HCT116 (cell line): ENCODE measurements at regions of chr10 and their contacts with region 1.

Region 1: DNA sequence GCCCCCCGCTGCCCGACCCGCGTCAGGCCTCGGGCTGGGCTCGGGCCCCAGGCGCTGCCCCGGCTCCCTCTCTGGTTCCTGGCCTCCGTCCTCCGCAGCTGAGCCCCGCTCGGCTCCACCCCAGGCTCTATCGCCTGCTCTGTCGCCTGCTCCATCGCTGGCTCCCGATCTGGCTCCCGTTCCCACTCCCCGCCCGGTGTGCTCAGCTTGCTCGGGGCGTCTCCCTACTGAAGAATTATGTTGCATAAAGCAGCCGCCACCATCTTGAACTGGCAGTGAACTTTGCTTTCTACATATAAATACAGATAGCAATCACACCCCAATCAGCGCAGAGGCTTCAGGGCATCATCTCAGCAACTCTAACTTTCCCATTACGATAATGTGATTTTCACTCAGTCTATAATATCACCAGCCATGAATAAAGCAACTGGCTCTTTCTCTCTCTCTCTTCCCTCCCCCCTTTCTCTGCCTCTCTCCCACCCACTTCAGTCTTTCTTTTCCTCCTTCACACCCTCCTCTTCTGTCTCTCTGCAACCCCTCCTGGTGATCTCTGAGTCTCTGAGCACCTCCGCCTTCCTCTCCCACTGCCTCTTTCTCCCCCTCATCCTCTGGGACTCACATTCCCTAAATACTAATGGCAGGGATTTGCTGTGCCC is 43.3 kb upstream of the BTRC start:
- DNase-seq: no peak
- ATAC-seq: no peak
- H3K4me3 ChIP-seq: no peak overlapping the region
- H3K27ac ChIP-seq: no peak overlapping the region
- H3K4me1 ChIP-seq: no peaks in the 10 kb centered on the region
- H3K27me3 ChIP-seq: peaks cover 20% of the 10 kb centered on the region
- CTCF ChIP-seq: no peak
- POLR2A ChIP-seq: no peak
- RAD21 ChIP-seq: no peak

Region 2: DNA sequence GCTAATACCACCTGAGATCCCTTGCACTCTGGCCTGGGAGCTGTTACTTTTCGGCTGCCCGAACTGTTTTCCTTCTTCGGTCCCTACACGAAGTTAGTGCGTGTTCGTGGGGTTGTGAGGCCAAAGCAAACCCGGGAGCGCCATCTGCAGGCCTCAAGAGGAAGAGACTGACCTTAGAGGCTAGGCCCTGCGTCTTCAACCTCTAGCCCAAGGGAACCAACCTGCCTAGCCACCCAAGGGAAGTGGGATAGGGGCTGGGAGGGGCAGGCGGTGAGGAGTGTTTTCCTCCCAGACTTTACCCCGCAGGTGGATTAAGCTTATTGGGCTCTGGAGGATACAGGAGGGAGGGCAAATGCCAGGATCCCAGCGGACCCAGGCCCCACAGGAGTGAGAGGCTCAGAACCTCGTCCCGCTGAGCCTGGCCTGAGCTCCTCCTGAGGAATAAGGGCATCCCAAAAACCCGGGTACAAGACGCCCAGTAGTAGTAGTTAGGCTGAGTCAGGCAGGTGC is 567.0 kb before region 1 on chr10:
- CTCF ChIA-PET with region 1: no interaction called
- POLR2A ChIA-PET with region 1: no interaction called
- RAD21 ChIA-PET with region 1: no interaction called
- intact Hi-C with region 1: no loop called
- DNase-seq: peak; percentile 80
- ATAC-seq: peak; percentile 69
- H3K4me3 ChIP-seq: no peak overlapping the region
- H3K27ac ChIP-seq: no peak overlapping the region
- H3K4me1 ChIP-seq: peaks cover 8 to 31% of the 10 kb centered on the region in 2 experiments; a peak in 3 of 4 replicates
- H3K27me3 ChIP-seq: no peaks in the 10 kb centered on the region
- CTCF ChIP-seq: peak; percentile 98 to 99 (median 98)
- POLR2A ChIP-seq: no peak
- RAD21 ChIP-seq: peak; percentile 98

Region 3: DNA sequence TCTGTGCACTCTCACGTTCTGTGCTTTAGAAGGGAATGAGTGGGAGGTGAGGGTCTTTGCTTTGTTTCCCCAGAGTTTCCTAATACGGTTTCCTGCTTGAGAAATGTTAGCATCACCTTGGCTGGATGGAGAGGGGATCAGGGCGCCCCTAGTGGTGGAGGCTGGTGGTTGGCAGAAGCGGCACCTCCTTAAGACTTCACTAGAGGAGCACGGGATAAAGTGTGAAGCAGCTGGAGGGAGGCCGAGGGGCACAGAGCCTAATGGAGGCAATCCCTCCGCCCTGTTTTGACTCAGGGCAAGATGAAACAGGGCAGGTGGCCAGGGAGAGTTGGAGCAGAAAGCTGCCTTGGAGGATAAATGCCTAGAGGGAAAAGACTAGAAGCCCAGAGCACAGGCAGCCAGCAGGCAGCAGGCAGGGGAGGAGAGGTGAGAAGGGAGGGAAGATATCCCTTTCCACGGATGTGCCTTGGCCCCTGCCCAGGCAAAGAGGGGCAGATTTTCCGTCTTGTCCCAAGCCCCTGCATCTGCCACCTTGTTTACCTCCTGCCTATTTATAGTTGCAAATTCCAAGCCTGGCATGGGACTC is 12.7 kb before region 1 on chr10:
- CTCF ChIA-PET with region 1: interaction called, 14 read pairs
- POLR2A ChIA-PET with region 1: no interaction called
- RAD21 ChIA-PET with region 1: no interaction called
- intact Hi-C with region 1: no loop called
- DNase-seq: peak; percentile 64
- ATAC-seq: peak; percentile 94
- H3K4me3 ChIP-seq: no peak overlapping the region
- H3K27ac ChIP-seq: no peak overlapping the region
- H3K4me1 ChIP-seq: peaks cover 0 to 5% of the 10 kb centered on the region in 2 experiments; a peak in 3 of 4 replicates
- H3K27me3 ChIP-seq: no peaks in the 10 kb centered on the region
- CTCF ChIP-seq: peak; percentile 86 to 97 (median 97)
- POLR2A ChIP-seq: no peak
- RAD21 ChIP-seq: peak; percentile 63

Region 4: GRCh38 chr10:101323495-101323894 is 12.8 kb after region 1 on chr10:
- CTCF ChIA-PET with region 1: no interaction called
- POLR2A ChIA-PET with region 1: no interaction called
- RAD21 ChIA-PET with region 1: no interaction called
- intact Hi-C with region 1: no loop called
- DNase-seq: no peak
- ATAC-seq: 0 out of 2 replicates have a peak, but pooled peaks have one; percentile 30
- H3K4me3 ChIP-seq: no peak overlapping the region
- H3K27ac ChIP-seq: no peak overlapping the region
- H3K4me1 ChIP-seq: no peaks in the 10 kb centered on the region
- H3K27me3 ChIP-seq: peaks cover 8% of the 10 kb centered on the region; the same call in 1 of the 2 replicates
- CTCF ChIP-seq: no peak
- POLR2A ChIP-seq: no peak
- RAD21 ChIP-seq: no peak

Region 5: DNA sequence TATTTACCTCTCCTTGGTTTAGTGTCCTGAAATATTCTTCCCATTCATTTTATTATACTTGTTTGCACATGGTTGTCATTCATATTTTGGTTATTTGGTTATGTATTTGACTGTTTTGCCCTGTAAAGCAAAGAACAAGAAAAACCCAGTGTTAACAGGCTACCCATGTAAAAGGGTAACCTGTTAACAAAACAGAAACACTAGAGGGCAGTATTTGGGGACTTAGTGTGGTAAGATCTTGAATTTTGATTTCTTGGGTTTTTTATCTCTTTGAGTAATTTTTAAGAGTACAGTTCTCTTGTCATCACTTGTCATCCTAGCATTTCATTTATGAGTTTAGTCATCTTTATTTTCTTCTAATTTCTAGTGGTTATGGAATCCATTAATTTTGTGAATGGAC is 226.1 kb after region 1 on chr10:
- CTCF ChIA-PET with region 1: no interaction called
- POLR2A ChIA-PET with region 1: no interaction called
- RAD21 ChIA-PET with region 1: no interaction called
- intact Hi-C with region 1: no loop called
- DNase-seq: peak; percentile 39
- ATAC-seq: peak; percentile 78
- H3K4me3 ChIP-seq: no peak overlapping the region
- H3K27ac ChIP-seq: no peak overlapping the region
- H3K4me1 ChIP-seq: no peaks in the 10 kb centered on the region
- H3K27me3 ChIP-seq: no peaks in the 10 kb centered on the region
- CTCF ChIP-seq: peak; percentile 53 to 93 (median 72); a peak in 5 of 6 replicates
- POLR2A ChIP-seq: no peak
- RAD21 ChIP-seq: peak; percentile 47